CD4-positive, alpha-beta T cell (primary cell): ENCODE measurements at regions of chr2 and their contacts with region 1.

Region 1: DNA sequence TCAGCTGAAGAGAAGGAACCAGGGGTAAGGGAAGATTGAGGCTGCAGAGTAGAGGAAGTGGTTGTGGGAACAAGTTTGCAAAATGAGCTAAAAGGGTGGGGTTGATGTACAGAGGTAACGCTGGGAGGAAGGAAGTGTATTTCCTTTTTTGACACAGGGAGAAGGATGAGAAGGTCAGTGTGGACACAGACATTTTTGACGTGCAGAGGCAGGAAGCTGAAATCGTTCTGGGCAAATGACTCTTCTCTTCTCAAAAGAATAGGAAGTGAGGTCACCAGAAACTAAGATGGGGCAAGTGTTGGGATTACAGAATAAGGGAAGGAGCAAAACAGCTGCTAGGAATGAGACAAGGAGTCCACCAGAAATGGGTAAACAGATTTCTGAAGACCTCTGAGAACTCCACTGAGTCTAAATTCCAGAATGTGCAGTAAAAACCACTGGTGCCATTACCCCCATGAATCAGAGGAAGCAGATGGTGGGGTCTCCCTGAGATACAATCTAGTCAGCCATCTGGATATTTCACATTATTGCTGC is 20.0 kb upstream of the RNF149 start:
- DNase-seq: peak in 6 of 14 experiments; percentile 24 to 94 (median 64)
- ATAC-seq: peak; percentile 85
- H3K4me3 ChIP-seq: peak overlapping the region; percentile 0
- H3K4me3 Mint-ChIP-seq: no peak overlapping the region
- H3K27ac ChIP-seq: peak overlapping the region; percentile 51 to 67
- H3K27ac Mint-ChIP-seq: no peak overlapping the region
- H3K4me1 ChIP-seq: peaks cover 60% of the 10 kb centered on the region
- H3K4me1 Mint-ChIP-seq: peaks cover 22% of the 10 kb centered on the region
- H3K27me3 ChIP-seq: no peaks in the 10 kb centered on the region
- H3K27me3 Mint-ChIP-seq: no peaks in the 10 kb centered on the region
- CTCF ChIP-seq: no peak

Region 2: GRCh38 chr2:101300164-101300563 is 28.4 kb before region 1 on chr2:
- CTCF ChIA-PET with region 1: no interaction called
- POLR2A ChIA-PET with region 1: interaction called, 47 read pairs
- intact Hi-C with region 1: no loop called
- DNase-seq: no peak
- ATAC-seq: peak; percentile 16
- H3K4me3 ChIP-seq: no peak overlapping the region
- H3K4me3 Mint-ChIP-seq: peak overlapping the region; percentile 8
- H3K27ac ChIP-seq: no peak overlapping the region
- H3K27ac Mint-ChIP-seq: peak overlapping the region; percentile 75
- H3K4me1 ChIP-seq: peaks cover 80% of the 10 kb centered on the region
- H3K4me1 Mint-ChIP-seq: peaks cover 95% of the 10 kb centered on the region
- H3K27me3 ChIP-seq: no peaks in the 10 kb centered on the region
- H3K27me3 Mint-ChIP-seq: no peaks in the 10 kb centered on the region
- CTCF ChIP-seq: no peak

Region 3: GRCh38 chr2:101308432-101309210 is 19.9 kb before region 1 on chr2 and contains the start of gene RNF149:
- CTCF ChIA-PET with region 1: interaction called, 4 read pairs
- POLR2A ChIA-PET with region 1: interaction called, 79 read pairs
- intact Hi-C with region 1: loop called (anchors 1 to 2 kb)
- DNase-seq: peak; percentile 82 to 95 (median 93)
- ATAC-seq: peak; percentile 56
- H3K4me3 ChIP-seq: peak within 1 kb of the TSS; percentile 90
- H3K4me3 Mint-ChIP-seq: peak within 1 kb of the TSS; percentile 98
- H3K27ac ChIP-seq: peak within 1 kb of the TSS; percentile 85 to 95
- H3K27ac Mint-ChIP-seq: peak within 1 kb of the TSS; percentile 96
- H3K4me1 ChIP-seq: peaks cover 67% of the 10 kb centered on the region
- H3K4me1 Mint-ChIP-seq: peaks cover 79% of the 10 kb centered on the region
- H3K27me3 ChIP-seq: no peaks in the 10 kb centered on the region
- H3K27me3 Mint-ChIP-seq: no peaks in the 10 kb centered on the region
- CTCF ChIP-seq: no peak
- total RNA-seq, gene RNF149: 139 to 150 TPM

Region 4: GRCh38 chr2:101341901-101342624 is 13.5 kb after region 1 on chr2:
- CTCF ChIA-PET with region 1: interaction called, 31 read pairs
- POLR2A ChIA-PET with region 1: interaction called, 11 read pairs
- intact Hi-C with region 1: no loop called
- DNase-seq: peak; percentile 53 to 87 (median 68)
- ATAC-seq: peak; percentile 62
- H3K4me3 ChIP-seq: no peak overlapping the region
- H3K4me3 Mint-ChIP-seq: no peak overlapping the region
- H3K27ac ChIP-seq: no peak overlapping the region
- H3K27ac Mint-ChIP-seq: no peak overlapping the region
- H3K4me1 ChIP-seq: peaks cover 23% of the 10 kb centered on the region
- H3K4me1 Mint-ChIP-seq: peaks cover 43% of the 10 kb centered on the region
- H3K27me3 ChIP-seq: no peaks in the 10 kb centered on the region
- H3K27me3 Mint-ChIP-seq: no peaks in the 10 kb centered on the region
- CTCF ChIP-seq: peak; percentile 93

Region 5: DNA sequence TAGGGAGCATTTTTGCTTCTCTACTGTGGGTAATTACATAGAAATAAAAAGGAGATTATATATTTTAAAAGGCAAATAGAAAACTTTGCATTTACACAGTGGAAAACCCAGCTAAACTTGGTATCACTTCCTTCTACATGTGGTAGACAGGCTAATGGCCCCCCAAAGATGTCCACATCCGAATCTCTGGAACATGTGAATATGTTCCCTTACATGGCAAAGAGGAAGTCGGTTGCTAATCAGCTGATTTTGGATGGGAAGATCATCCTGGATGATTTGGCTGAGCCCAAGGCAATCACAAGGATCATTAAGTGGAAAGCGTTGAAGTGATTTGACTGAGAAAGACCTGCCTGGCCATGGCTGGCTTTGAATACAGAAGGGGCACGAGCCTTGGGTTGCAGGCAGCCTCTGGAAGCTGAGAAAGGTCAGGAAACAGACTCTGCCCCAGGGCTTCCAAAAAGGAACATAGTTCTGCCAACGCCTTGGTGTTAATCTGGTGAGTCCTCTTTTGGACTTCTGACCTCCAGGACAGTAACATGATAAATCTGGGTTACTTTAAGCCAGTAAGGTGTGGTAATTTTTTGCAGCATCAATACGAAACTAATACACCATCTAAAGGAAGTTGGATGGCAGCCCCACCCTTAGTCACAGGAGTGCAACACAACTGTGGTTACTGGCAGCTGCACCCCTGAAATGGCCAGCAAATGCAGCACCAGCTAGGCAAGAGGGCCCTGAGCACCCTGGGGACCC is 32.8 kb after region 1 on chr2:
- CTCF ChIA-PET with region 1: no interaction called
- POLR2A ChIA-PET with region 1: interaction called, 17 read pairs
- intact Hi-C with region 1: no loop called
- DNase-seq: peak in 10 of 14 experiments; percentile 9 to 69 (median 27)
- ATAC-seq: peak; percentile 71
- H3K4me3 ChIP-seq: peak overlapping the region; percentile 19
- H3K4me3 Mint-ChIP-seq: peak overlapping the region; percentile 65
- H3K27ac ChIP-seq: peak overlapping the region in 1 of 2 donors; percentile 55
- H3K27ac Mint-ChIP-seq: peak overlapping the region; percentile 72
- H3K4me1 ChIP-seq: peaks cover 19% of the 10 kb centered on the region
- H3K4me1 Mint-ChIP-seq: peaks cover 41% of the 10 kb centered on the region
- H3K27me3 ChIP-seq: no peaks in the 10 kb centered on the region
- H3K27me3 Mint-ChIP-seq: no peaks in the 10 kb centered on the region
- CTCF ChIP-seq: no peak

Region 6: DNA sequence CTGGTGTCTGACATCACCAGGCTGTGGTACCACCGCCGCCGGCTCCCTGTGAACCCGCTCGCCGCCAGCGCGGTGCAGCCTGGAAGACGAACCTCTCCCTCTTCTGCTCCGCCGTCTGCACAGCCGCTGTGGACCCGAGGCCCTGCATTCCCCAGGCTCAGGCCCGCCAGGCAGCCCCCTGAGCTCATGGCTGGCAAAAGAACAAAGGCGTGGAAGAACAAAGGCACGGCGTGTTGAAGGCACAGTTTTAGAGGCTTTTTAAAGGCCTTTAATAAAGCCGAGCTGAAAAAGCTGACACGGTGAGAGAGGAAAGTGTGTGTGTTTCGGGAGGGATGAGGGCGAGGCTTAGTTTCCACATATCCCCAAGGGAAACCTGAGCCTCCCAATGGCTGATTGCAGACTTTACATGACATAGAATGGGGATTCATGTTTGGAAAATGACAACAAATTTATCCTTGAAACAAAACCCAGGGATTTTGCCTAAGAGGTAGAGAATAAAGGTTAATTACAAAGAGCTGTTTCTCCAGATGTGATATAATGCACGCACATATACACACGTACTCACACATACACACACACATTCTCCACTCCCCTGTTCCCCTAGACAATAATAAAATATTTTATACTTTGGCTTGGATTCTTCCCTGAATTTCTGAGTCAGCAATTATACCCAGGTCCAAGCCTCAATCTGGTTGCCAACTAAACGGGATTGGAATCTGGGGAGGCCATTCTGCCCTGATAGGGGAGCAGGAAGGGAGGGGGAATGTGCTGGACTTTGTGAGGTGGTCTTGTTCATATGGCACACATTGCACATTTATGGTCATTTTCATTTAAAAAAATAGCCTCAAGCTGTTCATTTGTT is 106.7 kb after region 1 on chr2:
- CTCF ChIA-PET with region 1: no interaction called
- POLR2A ChIA-PET with region 1: no interaction called
- intact Hi-C with region 1: no loop called
- DNase-seq: no peak
- ATAC-seq: no peak
- H3K4me3 ChIP-seq: no peak overlapping the region
- H3K4me3 Mint-ChIP-seq: no peak overlapping the region
- H3K27ac ChIP-seq: no peak overlapping the region
- H3K27ac Mint-ChIP-seq: no peak overlapping the region
- H3K4me1 ChIP-seq: no peaks in the 10 kb centered on the region
- H3K4me1 Mint-ChIP-seq: no peaks in the 10 kb centered on the region
- H3K27me3 ChIP-seq: no peaks in the 10 kb centered on the region
- H3K27me3 Mint-ChIP-seq: no peaks in the 10 kb centered on the region
- CTCF ChIP-seq: no peak